H1 (cell line): ENCODE measurements at regions of chr7 and their contacts with region 1.

Region 1: GRCh38 chr7:66557608-66558143 is 71.0 kb upstream of the KCTD7 start:
- DNase-seq: peak; percentile 27 to 99
- H3K4me3 ChIP-seq: no peak overlapping the region
- H3K27ac ChIP-seq: no peak overlapping the region
- H3K4me1 ChIP-seq: peaks cover 0 to 5% (median 1%) of the 10 kb centered on the region in 4 experiments; a peak in 4 of 7 replicates
- H3K27me3 ChIP-seq: no peaks in the 10 kb centered on the region
- CTCF ChIP-seq: peak; percentile 89 to 99 (median 95)
- EP300 ChIP-seq: no peak
- POLR2A ChIP-seq: no peak
- RAD21 ChIP-seq: peak; percentile 90 to 96

Region 2: GRCh38 chr7:66296001-66296521 is 261.6 kb before region 1 on chr7:
- CTCF ChIA-PET with region 1: no interaction called
- POLR2A ChIA-PET with region 1: no interaction called
- DNase-seq: no peak
- H3K4me3 ChIP-seq: no peak overlapping the region
- H3K27ac ChIP-seq: no peak overlapping the region
- H3K4me1 ChIP-seq: no peaks in the 10 kb centered on the region; a peak in 1 of 7 replicates
- H3K27me3 ChIP-seq: no peaks in the 10 kb centered on the region
- CTCF ChIP-seq: no peak
- EP300 ChIP-seq: no peak
- POLR2A ChIP-seq: no peak
- RAD21 ChIP-seq: no peak

Region 3: GRCh38 chr7:66575398-66575797 is 17.7 kb after region 1 on chr7:
- CTCF ChIA-PET with region 1: interaction called, 34 read pairs
- POLR2A ChIA-PET with region 1: interaction called, 11 read pairs
- DNase-seq: no peak
- H3K4me3 ChIP-seq: no peak overlapping the region
- H3K27ac ChIP-seq: no peak overlapping the region
- H3K4me1 ChIP-seq: no peaks in the 10 kb centered on the region
- H3K27me3 ChIP-seq: no peaks in the 10 kb centered on the region
- CTCF ChIP-seq: no peak
- EP300 ChIP-seq: no peak
- POLR2A ChIP-seq: no peak
- RAD21 ChIP-seq: no peak

Region 4: DNA sequence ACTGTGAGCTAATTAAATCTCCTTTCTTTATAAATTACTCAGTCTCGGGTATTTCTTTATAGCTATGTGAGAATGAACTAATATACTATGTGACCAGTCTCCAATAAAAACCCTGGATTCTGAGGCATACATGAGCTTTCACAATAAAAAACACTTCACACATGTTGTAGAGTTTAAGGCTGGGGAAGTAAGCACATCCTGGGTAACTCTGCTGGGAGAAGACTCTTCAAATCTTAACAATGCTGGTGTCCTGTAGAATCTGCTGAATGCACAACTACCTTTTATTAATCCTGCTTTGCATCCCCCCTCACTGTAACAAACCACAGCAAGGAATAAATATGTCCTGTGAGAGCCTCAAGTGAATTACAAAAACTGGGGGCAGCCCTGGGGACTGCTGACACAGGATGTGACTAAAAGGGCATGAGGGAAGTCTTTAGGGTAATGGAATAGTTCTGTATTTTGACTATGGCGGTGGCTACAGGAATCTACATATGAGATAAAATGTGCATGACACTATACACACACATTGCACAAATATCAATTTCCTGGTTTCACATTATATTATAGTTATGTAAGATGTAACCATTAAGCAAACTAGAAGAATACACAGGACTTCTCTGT is 25.9 kb after region 1 on chr7:
- CTCF ChIA-PET with region 1: interaction called, 6 read pairs
- POLR2A ChIA-PET with region 1: interaction called, 11 read pairs
- DNase-seq: no peak
- H3K4me3 ChIP-seq: no peak overlapping the region
- H3K27ac ChIP-seq: no peak overlapping the region
- H3K4me1 ChIP-seq: no peaks in the 10 kb centered on the region
- H3K27me3 ChIP-seq: no peaks in the 10 kb centered on the region
- CTCF ChIP-seq: no peak
- EP300 ChIP-seq: no peak
- POLR2A ChIP-seq: no peak
- RAD21 ChIP-seq: no peak

Region 5: GRCh38 chr7:66609176-66609575 is 51.5 kb after region 1 on chr7:
- CTCF ChIA-PET with region 1: interaction called, 13 read pairs
- POLR2A ChIA-PET with region 1: no interaction called
- DNase-seq: no peak
- H3K4me3 ChIP-seq: no peak overlapping the region
- H3K27ac ChIP-seq: no peak overlapping the region
- H3K4me1 ChIP-seq: no peaks in the 10 kb centered on the region
- H3K27me3 ChIP-seq: no peaks in the 10 kb centered on the region
- CTCF ChIP-seq: no peak
- EP300 ChIP-seq: no peak
- POLR2A ChIP-seq: no peak
- RAD21 ChIP-seq: no peak

Region 6: DNA sequence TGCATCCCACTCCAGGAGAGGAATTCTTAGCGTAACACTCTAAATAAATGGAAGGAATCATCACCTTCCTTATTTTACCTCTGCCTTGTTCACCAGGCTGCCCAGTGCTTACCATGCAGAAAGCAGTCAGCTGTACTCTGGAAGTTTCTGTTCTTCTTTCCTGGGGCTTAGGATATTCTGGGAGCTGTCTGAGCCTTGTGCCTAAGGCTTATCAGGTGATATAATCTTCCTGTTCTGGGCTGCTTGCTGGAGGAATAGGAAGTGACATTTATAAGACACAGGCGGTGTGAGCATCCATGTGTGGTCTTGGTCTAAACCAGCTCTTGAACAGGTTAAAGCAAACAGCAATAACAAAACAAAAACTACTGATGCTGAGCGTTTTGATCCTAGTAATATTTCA is 84.5 kb after region 1 on chr7:
- CTCF ChIA-PET with region 1: interaction called, 12 read pairs
- POLR2A ChIA-PET with region 1: no interaction called
- DNase-seq: no peak
- H3K4me3 ChIP-seq: no peak overlapping the region
- H3K27ac ChIP-seq: no peak overlapping the region
- H3K4me1 ChIP-seq: no peaks in the 10 kb centered on the region
- H3K27me3 ChIP-seq: no peaks in the 10 kb centered on the region
- CTCF ChIP-seq: no peak
- EP300 ChIP-seq: no peak
- POLR2A ChIP-seq: no peak
- RAD21 ChIP-seq: no peak